ENCODE measurements at regions of chr12 and their contacts with region 1.

Region 1: DNA sequence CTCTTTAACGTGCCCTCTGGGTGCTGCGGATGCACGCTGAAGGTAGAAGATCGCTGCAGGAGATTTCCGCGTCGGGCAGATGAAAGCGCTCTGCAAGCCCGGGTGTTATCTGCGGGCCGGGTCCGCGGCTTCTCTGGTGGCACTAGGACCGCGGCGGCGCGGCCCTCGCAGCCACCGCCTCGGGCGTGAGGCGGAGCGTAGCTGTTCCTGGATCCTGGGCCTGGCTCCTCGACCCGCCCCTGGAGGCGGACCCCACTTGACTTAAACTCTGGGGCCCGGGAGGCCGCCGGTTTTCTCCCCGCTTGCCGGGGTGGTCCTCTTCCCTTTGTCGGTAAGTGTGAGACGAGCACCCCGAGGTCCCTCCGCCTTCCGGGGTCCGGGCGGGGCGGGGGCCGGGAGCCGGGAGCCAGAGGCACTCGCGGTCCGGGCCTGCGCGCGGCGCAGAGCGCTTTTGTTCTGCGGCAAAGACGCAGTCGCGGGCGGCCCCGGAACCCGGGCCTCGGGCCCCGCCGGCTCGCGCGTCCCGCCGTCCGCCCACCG is at the start of gene RESF1:
- DNase-seq: peak; percentile 92
- ATAC-seq: peak; percentile 86
- H3K4me3 Mint-ChIP-seq: peak within 1 kb of the TSS; percentile 85
- H3K27ac Mint-ChIP-seq: peak within 1 kb of the TSS; percentile 95
- H3K4me1 Mint-ChIP-seq: peaks cover 60% of the 10 kb centered on the region
- H3K27me3 Mint-ChIP-seq: no peaks in the 10 kb centered on the region
- total RNA-seq, gene RESF1: 112 to 126 TPM

Region 2: GRCh38 chr12:31659087-31659933 is 299.9 kb before region 1 on chr12 and contains the start of gene ETFBKMT:
- CTCF ChIA-PET with region 1: interaction called, 11 read pairs
- POLR2A ChIA-PET with region 1: interaction called, 14 read pairs
- DNase-seq: peak; percentile 98
- ATAC-seq: peak; percentile 100
- H3K4me3 Mint-ChIP-seq: peak within 1 kb of the TSS; percentile 96
- H3K27ac Mint-ChIP-seq: peak within 1 kb of the TSS; percentile 99
- H3K4me1 Mint-ChIP-seq: peaks cover 16% of the 10 kb centered on the region
- H3K27me3 Mint-ChIP-seq: no peaks in the 10 kb centered on the region
- total RNA-seq, gene ETFBKMT: 1.0 to 1.4 TPM

Region 3: GRCh38 chr12:31682136-31682962 is 276.9 kb before region 1 on chr12:
- CTCF ChIA-PET with region 1: interaction called, 27 read pairs
- POLR2A ChIA-PET with region 1: no interaction called
- DNase-seq: peak; percentile 80
- ATAC-seq: peak; percentile 81
- H3K4me3 Mint-ChIP-seq: no peak overlapping the region
- H3K27ac Mint-ChIP-seq: peak overlapping the region; percentile 60
- H3K4me1 Mint-ChIP-seq: peaks cover 9% of the 10 kb centered on the region
- H3K27me3 Mint-ChIP-seq: no peaks in the 10 kb centered on the region

Region 4: GRCh38 chr12:31728917-31729640 is 230.2 kb before region 1 on chr12 and contains the start of gene AMN1:
- CTCF ChIA-PET with region 1: interaction called, 5 read pairs
- POLR2A ChIA-PET with region 1: interaction called, 25 read pairs
- DNase-seq: peak; percentile 99
- ATAC-seq: peak; percentile 97
- H3K4me3 Mint-ChIP-seq: peak within 1 kb of the TSS; percentile 96
- H3K27ac Mint-ChIP-seq: peak within 1 kb of the TSS; percentile 99
- H3K4me1 Mint-ChIP-seq: peaks cover 51% of the 10 kb centered on the region
- H3K27me3 Mint-ChIP-seq: no peaks in the 10 kb centered on the region
- total RNA-seq, gene AMN1: 3.4 to 3.5 TPM

Region 5: GRCh38 chr12:31896514-31897039 is 62.7 kb before region 1 on chr12:
- CTCF ChIA-PET with region 1: interaction called, 5 read pairs
- POLR2A ChIA-PET with region 1: interaction called, 29 read pairs
- DNase-seq: peak; percentile 95
- ATAC-seq: peak; percentile 99
- H3K4me3 Mint-ChIP-seq: peak overlapping the region; percentile 56
- H3K27ac Mint-ChIP-seq: peak overlapping the region; percentile 94
- H3K4me1 Mint-ChIP-seq: peaks cover 56% of the 10 kb centered on the region
- H3K27me3 Mint-ChIP-seq: no peaks in the 10 kb centered on the region

Region 6: DNA sequence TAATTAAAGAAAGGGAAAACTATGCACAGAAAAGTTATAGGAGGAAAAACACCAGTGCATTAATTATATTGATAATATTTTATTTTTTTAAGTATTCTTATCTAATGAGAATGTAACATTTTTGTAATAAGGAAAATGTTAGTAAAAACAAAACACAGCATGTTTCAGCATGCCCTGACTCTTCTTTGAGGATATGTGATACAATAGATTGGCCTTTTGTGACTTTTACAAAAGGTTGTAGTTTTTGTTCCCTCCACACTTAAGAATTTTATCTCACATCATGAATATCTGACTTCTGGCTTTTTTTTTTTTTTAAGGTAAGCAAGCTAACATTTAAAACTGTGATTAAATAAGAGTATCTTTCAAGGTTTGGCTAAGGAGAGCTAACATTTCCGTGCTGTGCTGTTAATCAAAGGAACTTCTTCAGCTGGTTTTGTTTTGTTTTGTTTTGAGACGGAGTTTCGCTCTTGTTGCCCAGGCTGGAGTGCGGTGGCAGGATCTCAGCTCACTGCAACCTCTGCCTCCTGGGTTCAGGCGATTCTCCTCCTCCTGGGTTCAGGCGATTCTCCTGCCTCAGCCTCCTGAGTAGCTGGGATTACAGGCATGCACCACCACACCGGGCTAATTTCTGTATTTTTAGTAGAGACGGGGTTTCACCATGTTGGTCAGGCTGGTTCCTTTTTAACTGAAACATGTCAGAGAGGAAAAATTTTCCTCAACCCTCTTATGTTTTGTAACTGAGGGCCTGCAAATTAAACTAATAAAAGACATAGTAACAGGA is 30.8 kb before region 1 on chr12:
- CTCF ChIA-PET with region 1: no interaction called
- POLR2A ChIA-PET with region 1: interaction called, 10 read pairs
- DNase-seq: peak; percentile 39
- ATAC-seq: peak; percentile 82
- H3K4me3 Mint-ChIP-seq: peak overlapping the region; percentile 81
- H3K27ac Mint-ChIP-seq: peak overlapping the region; percentile 98
- H3K4me1 Mint-ChIP-seq: peaks cover 50% of the 10 kb centered on the region
- H3K27me3 Mint-ChIP-seq: no peaks in the 10 kb centered on the region

Region 7: GRCh38 chr12:31991815-31992214 is 32.6 kb after region 1 on chr12:
- CTCF ChIA-PET with region 1: interaction called, 5 read pairs
- POLR2A ChIA-PET with region 1: interaction called, 15 read pairs
- DNase-seq: no peak
- ATAC-seq: no peak
- H3K4me3 Mint-ChIP-seq: no peak overlapping the region
- H3K27ac Mint-ChIP-seq: peak overlapping the region; percentile 84
- H3K4me1 Mint-ChIP-seq: peaks cover 33% of the 10 kb centered on the region
- H3K27me3 Mint-ChIP-seq: no peaks in the 10 kb centered on the region

Measured in activated CD8-positive, alpha-beta T cell treated with anti-CD3 and anti-CD28 coated beads, Interleukin-2, amount 10 ng/mL, durations not matched to agents 7 days and 5 days (primary cell).